WTC11 (cell line): ENCODE measurements at regions of chr1 and their contacts with region 1.

Region 1: GRCh38 chr1:23403735-23404486 is 20.6 kb downstream of the TCEA3 start:
- DNase-seq: peak; percentile 95
- ATAC-seq: peak; percentile 95
- H3K4me3 Mint-ChIP-seq: peak overlapping the region; percentile 45
- H3K27ac Mint-ChIP-seq: no peak overlapping the region
- H3K4me1 Mint-ChIP-seq: peaks cover 9% of the 10 kb centered on the region; the same call in 1 of the 2 replicates
- H3K27me3 Mint-ChIP-seq: no peaks in the 10 kb centered on the region
- CTCF ChIP-seq: peak; percentile 92

Region 2: DNA sequence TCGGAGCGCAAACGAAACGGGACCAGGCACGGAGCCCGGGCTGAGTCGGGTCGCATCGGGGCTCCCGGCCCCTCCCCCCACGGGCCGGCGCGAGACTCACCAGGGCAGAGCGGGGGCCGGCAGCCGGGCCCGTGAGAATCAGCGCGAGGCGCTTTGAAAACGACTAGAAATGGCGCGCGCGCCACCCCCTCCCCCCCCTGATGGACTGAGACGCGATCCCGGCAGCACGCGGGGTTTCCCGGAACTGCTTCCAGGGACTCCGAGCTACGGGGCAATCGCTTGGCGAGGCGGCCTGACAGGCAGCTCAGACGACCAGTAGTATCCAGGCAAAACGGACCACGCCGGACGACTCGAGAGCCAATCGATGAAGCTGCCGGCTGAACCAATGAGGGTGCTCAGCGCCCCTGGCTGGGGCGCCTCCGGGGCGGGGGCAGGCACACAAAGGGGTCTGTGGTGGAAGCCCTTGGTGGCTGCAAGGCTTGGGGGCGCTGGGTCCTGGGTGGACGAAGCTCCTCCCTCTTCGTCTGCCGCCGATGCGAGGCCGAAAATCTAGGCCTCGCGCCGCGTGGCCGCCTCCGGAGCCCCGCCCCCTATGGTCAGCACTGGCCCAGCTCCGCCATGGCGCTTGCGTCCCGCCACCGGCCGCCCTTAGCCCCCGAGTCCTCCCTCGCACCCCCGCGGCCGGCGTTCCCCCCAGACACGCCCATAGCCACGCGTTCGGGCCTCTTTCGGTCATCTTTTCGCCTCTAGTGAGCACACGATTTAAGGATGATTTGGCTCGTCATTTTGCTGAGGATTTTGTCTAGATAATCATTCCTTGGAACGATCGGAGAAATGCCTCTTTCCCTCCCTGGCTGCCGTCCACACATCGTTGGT is 59.6 kb before region 1 on chr1 and contains the start of gene HNRNPR:
- CTCF ChIA-PET with region 1: interaction called, 22 read pairs
- POLR2A ChIA-PET with region 1: no interaction called
- DNase-seq: peak; percentile 100
- ATAC-seq: peak; percentile 99
- H3K4me3 Mint-ChIP-seq: peak within 1 kb of the TSS; percentile 88
- H3K27ac Mint-ChIP-seq: peak within 1 kb of the TSS; percentile 99
- H3K4me1 Mint-ChIP-seq: peaks cover 43% of the 10 kb centered on the region
- H3K27me3 Mint-ChIP-seq: peaks cover 47% of the 10 kb centered on the region
- CTCF ChIP-seq: no peak
- total RNA-seq, gene HNRNPR: 157 to 178 TPM (median 170 TPM) in 3 replicates

Region 3: DNA sequence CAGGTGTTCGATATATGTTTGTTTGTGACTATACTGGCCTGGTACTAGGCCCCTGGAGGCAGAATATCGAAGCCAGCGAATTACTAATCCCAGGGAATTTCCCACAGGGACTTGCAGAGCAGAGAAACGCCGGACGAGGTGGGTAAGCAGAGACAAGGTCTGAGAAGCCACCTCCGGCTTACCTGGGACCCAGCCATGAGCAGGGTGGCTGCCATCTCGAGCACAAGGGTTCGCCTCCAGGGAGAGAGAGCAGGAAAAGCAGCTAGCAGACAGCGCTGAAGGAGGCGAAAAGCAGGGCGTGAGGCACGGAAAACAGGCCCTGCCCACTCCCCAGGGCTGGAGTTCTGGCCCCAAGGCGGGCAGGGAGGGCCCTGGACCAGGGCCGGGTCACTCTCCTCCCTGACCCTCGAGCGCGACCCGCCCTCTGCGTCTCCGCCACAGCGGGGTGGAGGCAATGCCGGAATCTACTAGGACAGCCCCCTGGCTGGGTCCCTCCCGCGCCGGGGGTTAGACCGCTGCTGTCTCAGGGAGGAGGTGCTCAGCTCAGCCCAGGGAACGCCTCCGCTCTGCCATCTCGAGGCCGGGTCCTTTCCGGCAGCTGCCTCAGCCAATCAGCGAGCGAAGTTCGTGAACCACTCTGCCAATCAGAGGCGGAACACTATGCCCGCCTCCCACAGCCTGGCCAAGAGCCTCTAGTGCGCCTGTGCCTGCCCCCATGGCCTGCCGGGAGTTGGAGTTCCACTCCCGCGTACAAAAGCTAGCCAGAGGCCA is 35.9 kb before region 1 on chr1:
- CTCF ChIA-PET with region 1: interaction called, 48 read pairs
- POLR2A ChIA-PET with region 1: interaction called, 4 read pairs
- DNase-seq: peak; percentile 98
- ATAC-seq: peak; percentile 90
- H3K4me3 Mint-ChIP-seq: peak overlapping the region; percentile 92
- H3K27ac Mint-ChIP-seq: peak overlapping the region; percentile 96
- H3K4me1 Mint-ChIP-seq: peaks cover 32% of the 10 kb centered on the region
- H3K27me3 Mint-ChIP-seq: peaks cover 50% of the 10 kb centered on the region
- CTCF ChIP-seq: no peak

Region 4: GRCh38 chr1:23416964-23417363 is 13.1 kb after region 1 on chr1:
- CTCF ChIA-PET with region 1: interaction called, 37 read pairs
- POLR2A ChIA-PET with region 1: no interaction called
- DNase-seq: no peak
- ATAC-seq: no peak
- H3K4me3 Mint-ChIP-seq: no peak overlapping the region
- H3K27ac Mint-ChIP-seq: no peak overlapping the region
- H3K4me1 Mint-ChIP-seq: no peaks in the 10 kb centered on the region; the same call in 1 of the 2 replicates
- H3K27me3 Mint-ChIP-seq: peaks cover 94% of the 10 kb centered on the region
- CTCF ChIP-seq: no peak

Region 5: GRCh38 chr1:23422241-23423030 is 18.5 kb after region 1 on chr1:
- CTCF ChIA-PET with region 1: interaction called, 37 read pairs
- POLR2A ChIA-PET with region 1: no interaction called
- DNase-seq: no peak
- ATAC-seq: no peak
- H3K4me3 Mint-ChIP-seq: no peak overlapping the region
- H3K27ac Mint-ChIP-seq: no peak overlapping the region
- H3K4me1 Mint-ChIP-seq: peaks cover 11% of the 10 kb centered on the region
- H3K27me3 Mint-ChIP-seq: peaks cover 100% of the 10 kb centered on the region
- CTCF ChIP-seq: no peak

Region 6: GRCh38 chr1:23436520-23437354 is 32.8 kb after region 1 on chr1:
- CTCF ChIA-PET with region 1: interaction called, 12 read pairs
- POLR2A ChIA-PET with region 1: no interaction called
- DNase-seq: peak; percentile 99
- ATAC-seq: peak; percentile 96
- H3K4me3 Mint-ChIP-seq: peak overlapping the region; percentile 45
- H3K27ac Mint-ChIP-seq: no peak overlapping the region
- H3K4me1 Mint-ChIP-seq: peaks cover 6% of the 10 kb centered on the region
- H3K27me3 Mint-ChIP-seq: no peaks in the 10 kb centered on the region
- CTCF ChIP-seq: no peak

Region 7: DNA sequence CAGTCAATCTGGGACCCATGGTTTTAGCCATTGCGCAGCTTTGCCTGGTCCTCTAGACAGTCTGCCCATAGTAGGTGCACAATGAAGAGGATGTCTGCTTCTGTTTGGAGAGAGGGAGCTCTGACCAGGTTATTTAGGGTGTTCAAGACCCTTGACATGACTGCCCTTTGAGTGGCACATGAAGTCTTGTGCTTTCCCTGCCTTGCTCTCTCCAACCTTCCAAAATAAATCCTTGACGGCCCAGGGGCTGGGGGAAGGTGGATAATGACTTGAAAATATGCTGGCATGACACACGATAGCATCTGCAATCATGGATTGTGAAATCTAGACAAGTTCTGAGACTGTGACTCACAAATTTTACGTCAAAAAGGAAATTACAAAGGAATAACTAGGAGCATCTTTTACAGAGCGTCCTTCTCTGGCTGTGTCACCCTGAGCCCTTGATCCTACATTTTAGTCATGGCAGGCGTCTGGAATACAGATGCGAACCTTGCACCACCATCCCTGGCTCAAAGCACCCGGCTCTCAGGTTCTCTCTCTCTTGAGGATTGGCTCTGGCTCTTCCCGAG is 181.6 kb after region 1 on chr1:
- CTCF ChIA-PET with region 1: no interaction called
- POLR2A ChIA-PET with region 1: no interaction called
- DNase-seq: no peak
- ATAC-seq: no peak
- H3K4me3 Mint-ChIP-seq: no peak overlapping the region
- H3K27ac Mint-ChIP-seq: no peak overlapping the region
- H3K4me1 Mint-ChIP-seq: peaks cover 27% of the 10 kb centered on the region
- H3K27me3 Mint-ChIP-seq: peaks cover 3% of the 10 kb centered on the region
- CTCF ChIP-seq: no peak